ENCODE measurements at regions of chr11 and their contacts with region 1.

Region 1: DNA sequence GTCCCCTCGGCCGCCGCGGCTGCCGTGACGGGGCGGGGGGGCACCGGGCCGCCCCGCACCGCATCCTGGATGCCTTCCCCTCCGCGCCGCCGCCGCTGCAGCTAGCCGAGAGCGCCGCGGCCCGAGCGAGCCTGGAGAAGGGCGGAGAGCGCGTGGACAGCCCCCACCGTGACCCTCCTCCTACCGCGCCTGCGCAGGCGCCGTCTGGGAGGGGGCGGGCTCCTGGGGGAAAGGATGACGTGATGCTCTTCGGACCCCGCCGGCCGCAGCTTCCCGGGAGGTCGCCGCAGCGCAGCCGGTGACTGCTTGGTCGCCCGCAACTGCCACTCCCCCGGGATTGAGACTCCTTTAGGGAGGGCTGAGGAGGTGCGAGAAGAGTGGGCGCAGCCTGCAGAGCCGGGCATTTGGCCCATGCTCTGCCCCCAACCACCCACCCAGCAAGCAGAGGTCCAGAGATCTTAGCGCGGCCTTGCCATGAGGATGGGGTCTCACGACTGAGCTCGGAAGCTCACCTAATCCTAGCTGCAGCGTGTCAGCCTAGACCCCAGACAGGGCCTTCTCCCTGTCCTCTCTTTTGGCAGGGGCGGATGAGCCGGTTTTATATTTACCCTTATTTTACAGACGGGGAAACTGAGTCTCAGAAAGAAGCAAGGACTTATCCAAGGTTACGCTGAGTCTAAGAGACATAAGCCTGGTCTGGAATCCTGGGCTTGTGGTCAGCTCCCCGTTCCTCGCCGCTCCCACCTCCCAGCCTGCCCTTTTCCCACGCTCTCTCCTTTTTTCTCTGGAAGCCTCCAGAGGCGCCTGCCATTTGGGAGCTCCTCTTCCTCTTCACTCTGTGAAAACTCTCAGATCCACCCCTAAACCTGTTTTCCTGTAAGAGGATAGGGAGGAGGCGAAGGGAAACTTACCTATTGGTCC is at the start of gene DENND5A:
- DNase-seq: peak; percentile 85
- H3K4me3 Mint-ChIP-seq: peak within 1 kb of the TSS; percentile 84
- H3K27ac Mint-ChIP-seq: peak within 1 kb of the TSS; percentile 89
- H3K4me1 Mint-ChIP-seq: peaks cover 32% of the 10 kb centered on the region
- H3K27me3 Mint-ChIP-seq: peaks cover 29% of the 10 kb centered on the region
- total RNA-seq, gene DENND5A: 59.9 and 60.7 TPM in 2 replicates

Region 2: GRCh38 chr11:9003573-9004309 is 261.7 kb before region 1 on chr11 and contains the start of gene NRIP3:
- intact Hi-C with region 1: loop called (anchors 10 kb)
- DNase-seq: peak; percentile 94
- H3K4me3 Mint-ChIP-seq: peak within 1 kb of the TSS; percentile 86
- H3K27ac Mint-ChIP-seq: peak within 1 kb of the TSS; percentile 77
- H3K4me1 Mint-ChIP-seq: peaks cover 26% of the 10 kb centered on the region
- H3K27me3 Mint-ChIP-seq: peaks cover 45% of the 10 kb centered on the region
- total RNA-seq, gene NRIP3: 4.8 and 5.3 TPM in 2 replicates

Region 3: GRCh38 chr11:9170450-9170849 is 95.0 kb before region 1 on chr11:
- intact Hi-C with region 1: loop called (anchors 5 kb)
- DNase-seq: no peak
- H3K4me3 Mint-ChIP-seq: no peak overlapping the region
- H3K27ac Mint-ChIP-seq: no peak overlapping the region
- H3K4me1 Mint-ChIP-seq: peaks cover 18% of the 10 kb centered on the region
- H3K27me3 Mint-ChIP-seq: no peaks in the 10 kb centered on the region

Region 4: GRCh38 chr11:9250139-9250582 is 15.3 kb before region 1 on chr11:
- intact Hi-C with region 1: loop called (anchors 1 kb)
- DNase-seq: peak; percentile 84
- H3K4me3 Mint-ChIP-seq: peak overlapping the region; percentile 71
- H3K27ac Mint-ChIP-seq: peak overlapping the region; percentile 84
- H3K4me1 Mint-ChIP-seq: peaks cover 42% of the 10 kb centered on the region
- H3K27me3 Mint-ChIP-seq: no peaks in the 10 kb centered on the region

Region 5: DNA sequence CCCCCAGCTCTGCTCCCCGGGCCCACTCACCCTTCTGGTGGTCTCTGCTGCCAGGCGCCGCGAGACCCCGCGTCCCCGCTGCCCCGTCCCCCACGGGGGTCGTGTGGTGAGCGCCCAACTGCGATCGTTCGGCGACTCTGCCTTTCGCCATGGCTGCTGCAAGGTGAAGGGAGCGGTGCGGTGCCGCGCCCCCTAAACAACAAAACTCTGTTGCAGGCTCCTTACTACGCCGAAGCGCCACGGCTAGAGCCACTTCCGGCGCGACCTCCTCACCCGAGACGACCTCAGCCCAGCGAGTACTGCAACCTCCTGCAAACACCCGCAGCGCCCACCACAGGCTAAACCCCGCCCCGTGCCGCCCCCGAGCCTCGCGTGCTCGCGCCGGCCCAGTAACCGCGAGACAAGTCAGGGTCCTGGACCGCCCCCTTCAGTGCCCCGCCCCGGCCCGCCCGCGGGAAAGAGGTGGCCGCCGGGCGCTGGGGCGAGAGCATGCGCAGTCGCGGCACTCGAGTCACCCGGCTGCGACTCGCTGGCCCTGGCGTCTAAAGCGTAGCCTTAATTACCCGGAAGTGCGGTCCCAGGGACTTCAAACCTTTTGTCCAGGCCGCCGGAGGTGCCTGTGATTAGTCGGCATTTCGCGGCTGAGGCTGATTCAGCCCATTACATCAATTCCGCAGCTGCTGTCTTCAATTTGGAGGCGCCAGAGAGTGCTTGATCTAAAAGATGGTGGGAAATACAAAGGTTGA is 49.0 kb after region 1 on chr11 and contains the start of gene TMEM41B:
- intact Hi-C with region 1: loop called (anchors 1 kb)
- DNase-seq: peak; percentile 100
- H3K4me3 Mint-ChIP-seq: peak within 1 kb of the TSS; percentile 99
- H3K27ac Mint-ChIP-seq: peak within 1 kb of the TSS; percentile 97
- H3K4me1 Mint-ChIP-seq: peaks cover 38% of the 10 kb centered on the region
- H3K27me3 Mint-ChIP-seq: peaks cover 23% of the 10 kb centered on the region
- total RNA-seq, gene TMEM41B: 26.5 and 30.5 TPM in 2 replicates

Region 6: GRCh38 chr11:9460322-9461067 is 195.0 kb after region 1 on chr11 and contains the start of gene ZNF143:
- intact Hi-C with region 1: loop called (anchors 1 kb)
- DNase-seq: peak; percentile 100
- H3K4me3 Mint-ChIP-seq: peak within 1 kb of the TSS; percentile 97
- H3K27ac Mint-ChIP-seq: peak within 1 kb of the TSS; percentile 98
- H3K4me1 Mint-ChIP-seq: peaks cover 23% of the 10 kb centered on the region
- H3K27me3 Mint-ChIP-seq: no peaks in the 10 kb centered on the region
- total RNA-seq, gene ZNF143: 38.6 and 39.2 TPM in 2 replicates

Region 7: GRCh38 chr11:9573052-9573774 is 307.7 kb after region 1 on chr11 and contains the start of gene WEE1:
- intact Hi-C with region 1: loop called (anchors 2 kb)
- DNase-seq: peak; percentile 100
- H3K4me3 Mint-ChIP-seq: peak within 1 kb of the TSS; percentile 96
- H3K27ac Mint-ChIP-seq: peak within 1 kb of the TSS; percentile 93
- H3K4me1 Mint-ChIP-seq: peaks cover 30% of the 10 kb centered on the region
- H3K27me3 Mint-ChIP-seq: peaks cover 6% of the 10 kb centered on the region
- total RNA-seq, gene WEE1: 55.5 and 57.7 TPM in 2 replicates

Measured in activated CD4-positive, alpha-beta T cell treated with anti-CD3 and anti-CD28 coated beads, Interleukin-2, amount 10 ng/mL, durations not matched to agents 24 days and 14 days (primary cell).